ENCODE measurements at regions of chr18 and their contacts with region 1.

Region 1: GRCh38 chr18:616380-616995 is 19.7 kb downstream of the CLUL1 start:
- DNase-seq: no peak
- ATAC-seq: peak; percentile 79
- H3K4me3 ChIP-seq: no peak overlapping the region
- H3K27ac ChIP-seq: no peak overlapping the region
- H3K4me1 ChIP-seq: no peaks in the 10 kb centered on the region
- H3K27me3 ChIP-seq: no peaks in the 10 kb centered on the region

Region 2: DNA sequence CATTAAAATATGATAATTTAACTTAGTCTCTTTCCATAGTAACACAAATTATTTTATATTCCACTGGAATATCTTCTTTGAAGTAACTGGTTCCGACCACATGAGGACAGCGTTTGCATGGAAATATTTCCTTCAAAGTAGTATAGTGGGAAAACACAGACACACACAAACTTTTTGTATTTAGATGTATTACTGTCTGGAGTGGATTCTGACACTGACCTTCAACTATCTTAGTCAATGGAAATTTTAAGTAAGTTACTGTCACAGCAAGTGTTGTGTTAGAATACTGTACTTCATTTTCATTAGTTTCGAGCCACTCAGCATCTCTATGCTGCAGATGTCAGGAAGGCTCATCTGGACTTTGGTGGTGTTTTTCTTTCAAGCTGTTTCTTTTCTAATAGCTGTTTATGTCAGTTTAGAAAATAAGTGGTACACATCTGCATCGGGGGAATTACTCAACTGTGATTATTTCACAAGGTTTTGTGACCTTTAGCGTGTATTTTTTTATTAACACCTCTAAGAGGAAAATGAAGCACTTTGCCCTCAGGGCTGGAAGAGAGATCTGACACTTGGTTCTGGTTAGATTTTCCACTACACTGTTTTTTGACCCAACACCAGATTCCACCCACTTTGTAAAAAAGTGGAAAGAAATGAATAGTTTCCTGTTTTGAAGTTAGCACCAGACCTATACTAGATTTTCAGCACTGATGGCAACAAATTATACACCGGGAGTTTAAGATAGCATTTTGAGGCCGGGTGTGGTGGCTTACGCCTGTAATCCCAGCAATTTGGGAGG is 329.8 kb before region 1 on chr18:
- intact Hi-C with region 1: loop called (anchors 2 kb)
- DNase-seq: no peak
- ATAC-seq: no peak
- H3K4me3 ChIP-seq: no peak overlapping the region
- H3K27ac ChIP-seq: no peak overlapping the region
- H3K4me1 ChIP-seq: no peaks in the 10 kb centered on the region
- H3K27me3 ChIP-seq: no peaks in the 10 kb centered on the region

Region 3: DNA sequence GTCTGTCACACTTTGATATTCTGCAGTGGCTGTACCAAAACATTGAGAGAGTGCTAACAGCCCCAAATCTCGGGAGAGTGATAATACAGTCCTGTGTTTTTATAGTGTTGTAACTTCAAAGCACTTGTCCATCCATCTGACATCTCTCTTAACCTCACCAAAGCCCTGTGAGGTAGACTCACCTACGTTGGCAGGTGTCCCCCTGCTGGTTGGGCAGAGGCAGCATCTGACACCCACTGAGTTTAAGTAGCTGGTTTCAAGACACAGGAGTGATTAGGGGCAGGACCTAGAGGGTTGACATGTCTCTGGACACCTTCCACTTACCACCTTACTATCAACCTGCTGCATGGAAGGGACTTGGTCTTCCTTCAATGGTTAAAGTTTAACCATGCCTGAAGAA is 138.9 kb before region 1 on chr18:
- intact Hi-C with region 1: no loop called
- DNase-seq: no peak
- ATAC-seq: no peak
- H3K4me3 ChIP-seq: no peak overlapping the region
- H3K27ac ChIP-seq: no peak overlapping the region
- H3K4me1 ChIP-seq: peaks cover 0 to 4% of the 10 kb centered on the region in 2 donors
- H3K27me3 ChIP-seq: no peaks in the 10 kb centered on the region

Measured in aorta (tissue), 5 donors.